ENCODE measurements at regions of chr7 and their contacts with region 1.

Region 1: GRCh38 chr7:151631968-151632749 is 112.5 kb upstream of the RHEB start:
- DNase-seq: peak; percentile 89
- CTCF ChIP-seq: peak; percentile 74

Region 2: DNA sequence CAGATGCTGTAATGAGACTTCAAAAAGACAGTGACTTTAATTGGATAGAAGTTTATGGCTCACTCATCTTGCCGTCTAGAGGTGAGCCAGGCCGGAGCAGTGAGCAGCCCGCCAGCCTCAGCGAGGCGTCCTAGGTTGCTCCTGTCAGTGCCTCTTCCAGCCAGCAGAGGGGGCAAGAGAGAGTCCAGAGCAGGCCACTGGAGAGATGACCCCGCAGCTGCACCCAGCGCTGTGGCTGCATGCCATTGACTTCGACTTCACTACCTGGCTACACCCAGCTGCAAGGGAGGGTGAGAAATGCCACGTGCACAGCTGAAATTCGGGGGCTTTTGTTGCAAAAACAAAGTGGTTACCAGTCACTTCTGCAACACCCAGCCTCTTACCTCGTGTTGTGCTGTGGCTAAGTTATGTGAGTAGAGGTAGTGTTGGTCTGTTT is 264.0 kb before region 1 on chr7:
- CTCF ChIA-PET with region 1: interaction called, 16 read pairs
- POLR2A ChIA-PET with region 1: no interaction called
- DNase-seq: peak; percentile 84
- CTCF ChIP-seq: peak; percentile 92

Region 3: GRCh38 chr7:151621961-151622360 is 10.2 kb before region 1 on chr7:
- CTCF ChIA-PET with region 1: interaction called, 26 read pairs
- POLR2A ChIA-PET with region 1: no interaction called
- DNase-seq: no peak
- CTCF ChIP-seq: no peak

Region 4: DNA sequence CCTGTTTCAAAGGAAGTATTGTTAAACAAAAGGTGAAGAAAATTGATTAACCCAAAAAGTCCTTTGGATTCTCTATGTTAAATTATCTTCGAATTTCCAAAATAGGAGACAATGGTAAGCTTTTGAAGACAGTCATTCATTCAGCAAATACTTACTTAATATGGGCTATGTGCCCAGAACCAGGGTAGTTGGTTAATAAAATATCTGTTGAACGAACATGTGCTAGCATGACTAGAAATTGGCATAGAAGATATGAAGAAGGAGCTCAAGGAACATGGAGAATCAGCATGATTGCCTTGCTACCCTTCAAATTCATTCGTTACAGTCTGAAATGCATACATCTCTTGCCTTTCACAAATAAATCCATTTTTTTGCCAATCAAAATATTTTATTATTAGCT is 10.6 kb after region 1 on chr7:
- CTCF ChIA-PET with region 1: interaction called, 22 read pairs
- POLR2A ChIA-PET with region 1: no interaction called
- DNase-seq: no peak
- CTCF ChIP-seq: no peak

Region 5: GRCh38 chr7:151672716-151673115 is 40.6 kb after region 1 on chr7:
- CTCF ChIA-PET with region 1: no interaction called
- POLR2A ChIA-PET with region 1: no interaction called
- DNase-seq: no peak
- CTCF ChIP-seq: no peak

Measured in GM10248 (cell line).